ENCODE measurements at regions of chr22 and their contacts with region 1.

Region 1: GRCh38 chr22:22408731-22409696 is 99.5 kb downstream of the ZNF280B start:
- DNase-seq: peak in 1 of 2 experiments; percentile 69
- H3K4me3 ChIP-seq: no peak overlapping the region
- H3K27ac ChIP-seq: no peak overlapping the region
- H3K4me1 ChIP-seq: no peaks in the 10 kb centered on the region
- H3K27me3 ChIP-seq: peaks cover 68 to 98% (median 94%) of the 10 kb centered on the region in 4 experiments
- CTCF ChIP-seq: peak; percentile 67 to 81 (median 68)
- EP300 ChIP-seq: no peak
- POLR2A ChIP-seq: no peak
- RAD21 ChIP-seq: peak; percentile 68 to 74

Region 2: DNA sequence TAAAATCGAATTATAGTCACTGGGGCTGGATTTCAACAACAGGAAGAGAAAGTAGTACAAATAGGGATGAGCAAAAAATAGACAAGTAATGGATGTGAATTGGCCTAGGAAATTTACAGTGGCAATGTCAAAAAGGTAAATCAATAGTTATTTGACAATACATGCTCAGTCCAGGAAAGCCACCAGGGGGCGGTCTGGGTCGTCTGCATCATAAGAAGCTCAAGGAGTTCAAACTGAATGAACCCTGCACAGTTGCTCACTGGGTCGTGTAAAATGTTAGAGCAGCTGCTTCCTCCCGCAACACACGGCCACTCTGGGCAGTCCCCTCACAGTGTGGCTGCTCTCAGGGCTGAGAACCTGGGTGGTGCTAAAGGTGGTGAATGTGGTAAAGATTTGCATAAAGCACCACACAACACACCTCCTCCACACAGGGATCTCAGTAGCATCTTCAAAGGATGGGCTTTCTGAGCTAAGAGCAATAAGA is 13.7 kb after region 1 on chr22:
- CTCF ChIA-PET with region 1: interaction called, 25 read pairs
- POLR2A ChIA-PET with region 1: no interaction called
- DNase-seq: peak; percentile 21 to 85
- H3K4me3 ChIP-seq: no peak overlapping the region
- H3K27ac ChIP-seq: no peak overlapping the region
- H3K4me1 ChIP-seq: no peaks in the 10 kb centered on the region; a peak in 1 of 7 replicates
- H3K27me3 ChIP-seq: peaks cover 63 to 93% (median 88%) of the 10 kb centered on the region in 4 experiments
- CTCF ChIP-seq: peak; percentile 52 to 75 (median 72)
- EP300 ChIP-seq: no peak
- POLR2A ChIP-seq: no peak
- RAD21 ChIP-seq: peak; percentile 39 to 49; a peak in 3 of 4 replicates

Region 3: GRCh38 chr22:22440188-22440587 is 31.2 kb after region 1 on chr22:
- CTCF ChIA-PET with region 1: no interaction called
- POLR2A ChIA-PET with region 1: no interaction called
- DNase-seq: no peak
- H3K4me3 ChIP-seq: no peak overlapping the region
- H3K27ac ChIP-seq: no peak overlapping the region
- H3K4me1 ChIP-seq: no peaks in the 10 kb centered on the region
- H3K27me3 ChIP-seq: peaks cover 45 to 69% (median 59%) of the 10 kb centered on the region in 4 experiments
- CTCF ChIP-seq: no peak
- EP300 ChIP-seq: no peak
- POLR2A ChIP-seq: no peak
- RAD21 ChIP-seq: no peak

Measured in H1 (cell line).